Lower leg skin (tissue), 4 donors: ENCODE measurements at regions of chr3 and their contacts with region 1.

Region 1: GRCh38 chr3:181176601-181177000 is 187.1 kb upstream of the DNAJC19 start:
- DNase-seq: peak in 1 of 2 donors; percentile 52
- H3K4me3 ChIP-seq: no peak overlapping the region
- CTCF ChIP-seq: no peak
- POLR2A ChIP-seq: no peak

Region 2: DNA sequence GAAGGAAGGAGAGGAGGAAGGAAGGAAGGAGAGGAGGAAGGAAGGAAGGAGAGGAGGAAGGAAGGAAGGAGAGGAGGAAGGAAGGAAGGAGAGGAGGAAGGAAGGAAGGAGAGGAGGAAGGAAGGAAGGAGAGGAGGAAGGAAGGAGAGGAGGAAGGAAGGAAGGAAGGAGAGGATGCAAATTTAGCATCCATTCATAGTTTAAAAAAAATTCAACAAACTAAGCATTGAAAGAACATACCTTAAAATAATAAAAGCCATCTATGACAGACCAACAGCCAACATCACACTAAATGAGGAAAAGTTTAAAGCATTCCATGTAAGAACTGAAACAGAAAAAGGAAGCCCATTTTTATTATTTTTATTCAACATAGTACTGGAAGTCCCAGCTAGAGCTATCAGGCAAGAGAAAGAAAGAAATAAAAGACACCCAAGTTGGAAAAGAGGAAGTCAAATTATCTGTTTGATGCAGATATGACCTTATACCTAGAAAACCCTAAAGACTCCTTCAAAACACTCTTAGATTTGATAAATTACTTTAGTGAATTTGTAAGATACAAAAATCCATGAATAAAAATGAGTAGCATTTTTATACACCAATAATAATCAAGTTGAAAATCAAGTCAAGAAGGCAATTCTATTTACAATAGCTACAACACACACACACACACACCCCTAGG is 316.3 kb before region 1 on chr3:
- intact Hi-C with region 1: no loop called
- DNase-seq: no peak
- H3K4me3 ChIP-seq: no peak overlapping the region
- CTCF ChIP-seq: no peak
- POLR2A ChIP-seq: no peak

Region 3: GRCh38 chr3:180989291-180990163 is 187.1 kb before region 1 on chr3 and contains the start of gene DNAJC19:
- intact Hi-C with region 1: loop called (anchors 5 kb)
- DNase-seq: peak; percentile 95 to 97
- H3K4me3 ChIP-seq: peak within 1 kb of the TSS; percentile 70
- CTCF ChIP-seq: no peak
- POLR2A ChIP-seq: peak in 1 of 2 donors; percentile 45
- total RNA-seq, gene DNAJC19: 13.5 to 25.2 (median 20.6) TPM

Region 4: DNA sequence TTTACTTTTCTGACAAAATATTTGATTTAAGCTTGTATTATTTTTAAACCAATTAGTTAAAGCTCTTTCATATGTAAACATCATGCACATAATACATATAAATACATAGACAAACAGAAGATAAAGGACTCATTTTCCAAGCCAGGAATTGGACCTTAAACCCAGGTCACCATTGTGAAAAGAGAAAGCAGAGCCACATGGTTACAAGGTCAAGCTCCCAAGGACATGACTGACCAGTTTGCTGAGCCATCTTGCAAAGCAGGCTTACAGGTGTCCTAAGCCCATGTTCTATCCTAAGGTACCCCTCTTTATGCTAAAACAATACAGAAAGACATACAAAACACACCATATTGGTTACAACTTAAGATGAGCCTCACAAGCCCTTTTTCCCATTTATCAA is 136.6 kb before region 1 on chr3:
- intact Hi-C with region 1: no loop called
- DNase-seq: no peak
- H3K4me3 ChIP-seq: no peak overlapping the region
- CTCF ChIP-seq: no peak
- POLR2A ChIP-seq: no peak

Region 5: DNA sequence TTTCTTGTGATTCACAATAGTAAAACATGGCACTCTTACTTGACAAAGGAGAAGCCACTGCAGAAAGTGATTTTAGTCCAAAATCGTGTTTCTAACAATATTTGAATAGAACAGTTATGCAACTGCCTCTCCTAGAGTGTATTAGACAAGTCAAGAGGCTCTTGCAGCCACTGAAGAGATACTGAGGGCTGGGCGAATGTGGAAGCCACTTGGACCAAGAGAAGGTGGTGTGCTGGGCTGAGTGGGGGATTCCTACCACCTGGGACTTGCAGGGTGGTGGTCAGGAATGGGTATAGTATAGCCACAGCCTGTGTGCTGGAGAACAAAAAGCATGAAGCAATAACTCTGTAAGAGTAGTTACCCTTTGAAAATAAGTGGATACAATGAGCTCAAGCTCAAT is 36.7 kb after region 1 on chr3:
- intact Hi-C with region 1: no loop called
- DNase-seq: no peak
- H3K4me3 ChIP-seq: no peak overlapping the region
- CTCF ChIP-seq: no peak
- POLR2A ChIP-seq: no peak